HCT116 (cell line): ENCODE measurements at regions of chr2 and their contacts with region 1.

Region 1: DNA sequence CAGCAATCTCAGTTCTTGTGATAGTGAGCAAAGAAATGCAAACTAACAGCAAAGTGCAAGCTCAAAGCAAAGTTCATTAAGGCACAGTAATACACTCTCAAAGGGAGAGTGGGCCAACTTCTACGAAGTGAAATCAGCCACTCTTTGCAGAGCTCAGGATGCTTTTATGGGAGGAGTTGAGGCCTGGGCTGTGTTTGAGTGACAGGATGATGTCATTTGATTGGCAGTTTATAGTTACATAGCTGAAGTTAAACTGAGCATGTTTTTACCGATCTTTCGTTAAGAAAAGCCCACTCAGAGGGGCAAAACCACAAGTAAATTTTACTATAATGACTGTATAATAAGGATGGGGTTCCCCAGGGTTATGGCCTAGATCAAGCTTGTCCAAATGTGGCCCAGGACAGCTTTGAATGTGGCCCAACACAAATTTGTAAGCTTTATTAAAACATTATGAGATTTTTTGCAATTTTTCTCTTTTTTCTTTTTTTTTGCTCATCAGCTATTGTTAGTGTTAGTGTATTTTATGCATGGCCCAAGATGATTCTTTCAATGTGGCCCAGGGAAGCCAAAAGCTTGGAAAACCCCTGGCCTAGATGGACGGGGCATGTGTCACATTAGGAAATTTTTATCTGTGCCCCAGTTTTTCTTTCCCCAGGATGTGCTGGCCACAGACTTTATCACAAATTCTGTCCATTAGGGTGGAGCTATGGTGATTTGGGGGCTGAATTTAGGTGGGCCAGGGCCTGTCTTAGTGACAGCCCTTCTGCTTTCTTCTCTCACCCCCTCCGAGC is 8.3 kb upstream of the DNAH7 start:
- DNase-seq: no peak
- ATAC-seq: no peak
- H3K4me3 ChIP-seq: no peak overlapping the region
- H3K27ac ChIP-seq: no peak overlapping the region
- H3K4me1 ChIP-seq: no peaks in the 10 kb centered on the region
- H3K27me3 ChIP-seq: no peaks in the 10 kb centered on the region
- CTCF ChIP-seq: no peak
- POLR2A ChIP-seq: no peak
- RAD21 ChIP-seq: no peak

Region 2: GRCh38 chr2:195486987-195487644 is 589.9 kb before region 1 on chr2:
- CTCF ChIA-PET with region 1: no interaction called
- POLR2A ChIA-PET with region 1: no interaction called
- RAD21 ChIA-PET with region 1: no interaction called
- intact Hi-C with region 1: no loop called
- DNase-seq: peak; percentile 7
- ATAC-seq: no peak; the same call in 1 of the 2 replicates
- H3K4me3 ChIP-seq: no peak overlapping the region
- H3K27ac ChIP-seq: no peak overlapping the region
- H3K4me1 ChIP-seq: peaks cover 13 to 16% of the 10 kb centered on the region in 2 experiments; a peak in 3 of 4 replicates
- H3K27me3 ChIP-seq: no peaks in the 10 kb centered on the region
- CTCF ChIP-seq: no peak
- POLR2A ChIP-seq: no peak
- RAD21 ChIP-seq: no peak; the same call in 1 of the 2 replicates

Region 3: GRCh38 chr2:196307775-196308305 is 230.9 kb after region 1 on chr2:
- CTCF ChIA-PET with region 1: no interaction called
- POLR2A ChIA-PET with region 1: no interaction called
- RAD21 ChIA-PET with region 1: no interaction called
- intact Hi-C with region 1: no loop called
- DNase-seq: no peak
- ATAC-seq: no peak
- H3K4me3 ChIP-seq: no peak overlapping the region
- H3K27ac ChIP-seq: no peak overlapping the region
- H3K4me1 ChIP-seq: no peaks in the 10 kb centered on the region
- H3K27me3 ChIP-seq: no peaks in the 10 kb centered on the region
- CTCF ChIP-seq: no peak
- POLR2A ChIP-seq: no peak
- RAD21 ChIP-seq: no peak

Region 4: GRCh38 chr2:196337208-196337953 is 260.4 kb after region 1 on chr2:
- CTCF ChIA-PET with region 1: interaction called, 22 read pairs
- POLR2A ChIA-PET with region 1: no interaction called
- RAD21 ChIA-PET with region 1: interaction called, 3 to 6 read pairs
- intact Hi-C with region 1: loop called (anchors 1 kb)
- DNase-seq: no peak
- ATAC-seq: 0 out of 2 replicates have a peak, but pooled peaks have one; percentile 42
- H3K4me3 ChIP-seq: no peak overlapping the region
- H3K27ac ChIP-seq: no peak overlapping the region
- H3K4me1 ChIP-seq: no peaks in the 10 kb centered on the region
- H3K27me3 ChIP-seq: no peaks in the 10 kb centered on the region
- CTCF ChIP-seq: peak; percentile 26 to 53 (median 46); a peak in 4 of 6 replicates
- POLR2A ChIP-seq: no peak
- RAD21 ChIP-seq: peak; percentile 65

Region 5: DNA sequence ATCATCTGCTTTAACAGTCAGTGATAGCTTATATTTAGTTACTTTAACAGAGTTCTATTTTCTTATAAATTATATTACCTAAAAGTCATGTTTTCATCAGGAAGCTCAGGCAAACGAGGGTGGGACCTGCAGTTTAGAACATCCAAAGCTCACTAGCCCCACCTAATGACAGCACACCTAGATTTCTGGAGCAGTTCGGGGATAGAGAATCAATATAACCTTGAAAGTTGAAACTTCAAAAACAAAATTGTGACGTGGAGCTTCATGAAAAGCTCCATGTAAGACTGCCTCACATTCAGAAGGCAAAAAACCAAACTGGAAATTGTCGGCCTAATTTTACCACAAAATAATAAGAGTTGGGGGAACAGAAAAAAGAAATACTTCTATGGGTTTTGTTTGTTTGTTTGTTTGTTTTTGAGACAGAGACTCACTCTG is 376.7 kb after region 1 on chr2:
- CTCF ChIA-PET with region 1: interaction called, 21 read pairs
- POLR2A ChIA-PET with region 1: no interaction called
- RAD21 ChIA-PET with region 1: no interaction called
- intact Hi-C with region 1: no loop called
- DNase-seq: peak; percentile 60
- ATAC-seq: peak; percentile 97
- H3K4me3 ChIP-seq: no peak overlapping the region
- H3K27ac ChIP-seq: no peak overlapping the region
- H3K4me1 ChIP-seq: no peaks in the 10 kb centered on the region
- H3K27me3 ChIP-seq: no peaks in the 10 kb centered on the region
- CTCF ChIP-seq: peak; percentile 63 to 68 (median 67); a peak in 5 of 6 replicates
- POLR2A ChIP-seq: no peak
- RAD21 ChIP-seq: peak; percentile 84